Activated CD4-positive, alpha-beta T cell treated with anti-CD3 and anti-CD28 coated beads, Interleukin-2, amount 10 ng/mL, durations not matched to agents 24 days and 14 days (primary cell): ENCODE measurements at regions of chr2 and their contacts with region 1.

Region 1: DNA sequence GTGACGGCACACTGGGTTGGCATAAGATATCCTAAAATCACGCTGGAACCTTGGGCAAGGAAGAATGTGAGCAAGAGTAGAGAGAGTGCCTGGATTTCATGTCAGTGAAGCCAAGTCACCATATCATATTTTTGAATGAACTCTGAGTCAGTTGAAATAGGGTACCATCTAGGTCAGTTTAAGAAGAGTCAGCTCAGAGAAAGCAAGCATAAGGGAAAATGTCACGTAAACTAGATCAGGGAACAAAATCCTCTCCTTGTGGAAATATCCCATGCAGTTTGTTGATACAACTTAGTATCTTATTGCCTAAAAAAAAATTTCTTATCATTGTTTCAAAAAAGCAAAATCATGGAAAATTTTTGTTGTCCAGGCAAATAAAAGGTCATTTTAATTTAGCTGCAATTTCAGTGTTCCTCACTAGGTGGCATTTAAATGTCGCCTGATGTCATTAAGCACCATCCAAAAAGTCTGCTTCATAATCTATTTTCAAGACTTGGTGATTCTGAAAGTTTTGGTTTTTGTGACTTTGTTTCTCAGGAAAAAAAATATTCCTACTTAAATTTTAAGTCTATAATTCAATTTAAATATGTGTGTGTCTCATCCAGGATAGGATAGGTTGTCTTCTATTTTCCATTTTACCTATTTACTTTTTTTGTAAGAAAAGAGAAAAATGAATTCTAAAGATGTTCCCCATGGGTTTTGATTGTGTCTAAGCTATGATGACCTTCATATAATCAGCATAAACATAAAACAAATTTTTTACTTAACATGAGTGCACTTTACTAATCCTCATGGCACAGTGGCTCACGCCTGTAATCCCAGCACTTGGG is 19.6 kb downstream of the RSAD2 start:
- DNase-seq: no peak
- H3K4me3 Mint-ChIP-seq: no peak overlapping the region
- H3K27ac Mint-ChIP-seq: peak overlapping the region; percentile 21
- H3K4me1 Mint-ChIP-seq: peaks cover 17% of the 10 kb centered on the region
- H3K27me3 Mint-ChIP-seq: no peaks in the 10 kb centered on the region

Region 2: DNA sequence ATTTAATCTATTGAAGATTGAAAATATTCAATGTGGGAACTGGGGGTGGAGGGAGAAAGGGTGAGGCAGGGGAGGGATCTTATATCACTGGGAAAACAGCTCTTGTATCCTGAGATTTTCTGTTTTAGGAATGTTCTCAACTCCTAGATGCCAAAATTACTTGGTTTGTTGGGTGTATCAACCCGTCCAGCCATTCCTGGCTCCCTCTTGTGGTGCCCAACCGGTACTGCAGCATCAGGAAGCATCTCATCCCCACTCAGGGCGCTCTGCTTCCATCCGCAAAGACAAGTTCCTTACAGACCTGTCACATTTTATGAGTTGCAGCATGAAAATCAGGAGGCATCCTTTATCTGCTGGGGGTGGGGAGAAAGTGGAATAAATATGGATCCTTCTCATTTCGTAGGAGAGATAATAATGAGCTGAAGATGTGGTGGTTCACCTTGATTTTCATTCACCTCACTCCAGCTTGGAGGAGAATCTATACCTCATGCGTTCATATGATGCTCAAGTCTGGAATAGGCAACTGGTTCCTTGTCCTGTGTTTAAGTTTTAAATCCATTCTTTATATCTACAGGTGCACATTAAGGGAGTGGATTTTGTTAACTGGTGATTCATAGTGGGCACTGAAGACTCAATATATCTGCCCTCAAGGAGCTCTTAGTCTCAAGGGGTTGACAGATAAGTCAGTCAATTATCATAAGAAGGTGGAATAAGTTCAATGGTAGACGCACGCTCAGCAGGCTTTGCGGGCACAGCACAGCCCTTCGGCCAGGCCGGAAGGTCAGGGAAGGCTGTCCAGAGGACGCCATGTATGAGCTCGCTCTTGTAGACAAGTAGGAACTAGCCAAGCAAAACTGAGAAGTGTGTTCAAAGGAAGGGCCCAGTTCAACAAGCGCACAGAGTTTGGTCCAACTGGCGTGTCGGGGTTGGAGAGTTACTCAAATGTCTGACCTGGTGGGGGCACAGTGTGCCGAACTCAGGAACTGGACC is 147.4 kb after region 1 on chr2:
- intact Hi-C with region 1: loop called (anchors 1 kb)
- DNase-seq: peak; percentile 88
- H3K4me3 Mint-ChIP-seq: no peak overlapping the region
- H3K27ac Mint-ChIP-seq: no peak overlapping the region
- H3K4me1 Mint-ChIP-seq: peaks cover 4% of the 10 kb centered on the region
- H3K27me3 Mint-ChIP-seq: no peaks in the 10 kb centered on the region

Region 3: DNA sequence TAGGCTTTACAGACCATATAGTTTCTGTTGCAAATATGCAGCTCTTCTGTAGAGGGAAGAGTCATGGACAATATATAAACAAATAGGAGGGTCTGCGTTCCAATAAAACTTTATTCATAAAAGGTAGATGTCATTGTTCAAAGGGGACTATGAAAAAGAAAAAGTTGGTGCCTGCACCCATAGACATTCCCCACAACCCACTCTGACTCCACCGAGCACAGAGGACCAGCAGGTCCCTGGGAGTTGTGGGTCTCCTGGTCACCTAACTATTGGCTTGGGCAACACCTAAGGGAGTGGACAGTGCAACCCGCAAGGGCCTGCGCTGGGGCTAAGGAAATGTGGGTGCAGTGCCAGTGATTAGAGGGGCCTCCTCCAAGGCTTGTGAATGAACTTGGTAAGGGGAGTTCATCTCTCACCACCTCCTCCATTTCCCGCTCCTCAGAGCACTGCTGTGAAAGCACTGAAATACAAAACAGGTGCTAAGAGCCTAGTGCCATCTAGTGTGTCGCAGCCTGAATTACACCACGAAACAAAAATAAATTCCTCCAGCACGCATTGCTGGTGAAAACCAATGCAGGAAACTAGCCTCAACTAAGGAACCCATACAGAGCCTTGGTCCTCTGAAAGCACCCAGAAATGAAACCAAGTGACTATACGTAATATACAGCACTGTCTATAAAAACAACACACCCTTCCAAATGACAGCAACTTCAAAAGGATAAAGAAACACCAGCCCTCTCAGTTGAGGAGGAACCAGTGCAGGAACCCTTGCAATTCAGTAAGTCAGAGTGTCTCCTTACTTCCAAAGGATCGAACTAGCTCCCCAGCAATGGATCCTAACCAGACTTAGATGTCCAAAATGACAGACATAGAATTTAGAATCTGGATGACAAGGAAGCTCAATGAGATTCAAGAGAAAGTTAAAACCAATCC is 186.7 kb after region 1 on chr2:
- intact Hi-C with region 1: loop called (anchors 2 kb)
- DNase-seq: peak; percentile 70
- H3K4me3 Mint-ChIP-seq: no peak overlapping the region
- H3K27ac Mint-ChIP-seq: no peak overlapping the region
- H3K4me1 Mint-ChIP-seq: no peaks in the 10 kb centered on the region
- H3K27me3 Mint-ChIP-seq: peaks cover 5% of the 10 kb centered on the region

Region 4: DNA sequence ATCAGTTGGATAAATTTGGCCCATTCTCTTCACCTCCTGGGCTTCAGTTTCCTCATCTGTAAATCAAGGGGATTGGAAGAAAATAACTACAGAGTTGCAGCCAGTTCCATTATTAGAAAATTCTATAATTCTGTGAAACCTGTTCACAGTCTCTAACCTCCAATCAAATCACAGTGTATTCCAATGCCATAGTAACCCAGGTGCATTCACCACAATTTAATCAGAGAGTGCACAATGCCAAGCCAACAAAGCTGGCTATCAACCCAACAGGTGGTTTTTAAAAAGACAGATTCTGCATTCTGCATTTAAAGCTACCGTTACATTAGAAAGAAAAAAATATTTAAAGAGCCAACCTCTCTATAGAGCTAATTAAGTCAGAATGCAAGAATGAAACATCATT is 328.7 kb after region 1 on chr2:
- intact Hi-C with region 1: no loop called
- DNase-seq: no peak
- H3K4me3 Mint-ChIP-seq: no peak overlapping the region
- H3K27ac Mint-ChIP-seq: no peak overlapping the region
- H3K4me1 Mint-ChIP-seq: no peaks in the 10 kb centered on the region
- H3K27me3 Mint-ChIP-seq: peaks cover 6% of the 10 kb centered on the region